CD8-positive, alpha-beta T cell (primary cell): ENCODE measurements at regions of chr10 and their contacts with region 1.

Region 1: GRCh38 chr10:62183442-62183841 is 85.2 kb downstream of the RTKN2 start:
- DNase-seq: peak in 7 of 9 experiments; percentile 20 to 89 (median 51)
- ATAC-seq: peak; percentile 87
- H3K4me3 ChIP-seq: no peak overlapping the region
- H3K4me3 Mint-ChIP-seq: peak overlapping the region; percentile 30
- H3K27ac ChIP-seq: peak overlapping the region; percentile 6 to 41
- H3K27ac Mint-ChIP-seq: peak overlapping the region; percentile 83
- H3K4me1 ChIP-seq: peaks cover 58% of the 10 kb centered on the region
- H3K4me1 Mint-ChIP-seq: peaks cover 75% of the 10 kb centered on the region
- H3K27me3 ChIP-seq: no peaks in the 10 kb centered on the region
- H3K27me3 Mint-ChIP-seq: no peaks in the 10 kb centered on the region
- CTCF ChIP-seq: no peak

Region 2: DNA sequence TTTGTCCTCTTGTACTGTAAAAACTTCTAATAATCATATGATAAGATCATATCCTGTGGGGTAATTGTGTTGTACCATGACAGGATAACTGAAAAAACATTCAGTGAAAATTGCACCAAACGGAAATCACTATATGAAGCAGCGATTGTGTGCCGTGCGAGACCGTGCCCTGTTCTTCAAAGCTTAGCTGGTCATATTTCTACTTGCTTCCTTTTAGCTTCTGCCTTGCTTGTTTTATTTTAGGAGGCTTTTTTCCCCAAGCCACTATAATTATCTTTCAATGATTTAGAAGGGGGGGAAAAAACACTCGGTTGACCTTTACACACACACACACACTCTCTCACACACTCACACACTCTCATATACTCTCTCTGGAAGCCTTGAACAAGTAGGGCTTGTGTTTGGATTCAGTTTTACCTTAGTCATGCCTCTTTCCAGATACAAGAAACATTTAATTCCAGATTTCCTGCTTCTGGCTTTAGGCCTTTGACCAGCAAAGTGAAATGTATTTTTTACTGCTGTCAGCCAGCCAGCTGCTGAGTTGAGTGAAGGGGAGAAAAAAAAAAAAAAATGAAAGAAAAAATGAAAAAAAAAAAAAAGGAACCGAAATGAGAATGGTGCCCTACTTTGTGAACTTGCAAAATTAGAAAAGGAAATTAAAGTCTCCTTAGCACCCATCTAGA is 100.6 kb before region 1 on chr10:
- CTCF ChIA-PET with region 1: interaction called, 4 read pairs
- POLR2A ChIA-PET with region 1: no interaction called
- intact Hi-C with region 1: loop called in 1 of 2 experiments (anchors 5 kb)
- DNase-seq: peak in 8 of 9 experiments; percentile 9 to 68 (median 36)
- ATAC-seq: peak; percentile 86
- H3K4me3 ChIP-seq: no peak overlapping the region
- H3K4me3 Mint-ChIP-seq: peak overlapping the region; percentile 46
- H3K27ac ChIP-seq: peak overlapping the region in 1 of 2 experiments; percentile 68
- H3K27ac Mint-ChIP-seq: peak overlapping the region; percentile 55
- H3K4me1 ChIP-seq: peaks cover 19% of the 10 kb centered on the region
- H3K4me1 Mint-ChIP-seq: peaks cover 43% of the 10 kb centered on the region
- H3K27me3 ChIP-seq: no peaks in the 10 kb centered on the region
- H3K27me3 Mint-ChIP-seq: no peaks in the 10 kb centered on the region
- CTCF ChIP-seq: no peak

Region 3: DNA sequence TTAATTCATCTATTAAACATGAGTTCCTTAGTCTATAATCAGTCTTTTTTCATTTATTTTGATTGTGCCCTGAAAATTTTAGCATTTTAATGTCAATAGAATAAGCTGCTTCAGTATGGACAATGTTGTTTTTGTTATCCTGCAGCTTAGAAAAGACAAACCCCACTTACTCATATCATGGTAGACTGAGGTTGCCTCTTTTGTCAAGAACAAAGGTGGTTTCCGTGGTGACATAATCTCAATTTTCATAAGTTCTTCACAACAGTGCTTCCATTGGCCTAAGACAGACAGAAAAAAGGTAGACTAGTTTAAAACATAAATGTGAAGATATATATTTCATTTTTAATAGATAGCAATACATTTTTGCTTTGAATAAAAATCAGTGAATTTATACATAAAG is 16.1 kb after region 1 on chr10:
- CTCF ChIA-PET with region 1: no interaction called
- POLR2A ChIA-PET with region 1: interaction called, 4 read pairs
- intact Hi-C with region 1: loop called in 1 of 2 experiments (anchors 2 kb)
- DNase-seq: peak in 2 of 9 experiments; percentile 34 to 65
- ATAC-seq: peak; percentile 82
- H3K4me3 ChIP-seq: no peak overlapping the region
- H3K4me3 Mint-ChIP-seq: no peak overlapping the region
- H3K27ac ChIP-seq: no peak overlapping the region
- H3K27ac Mint-ChIP-seq: peak overlapping the region; percentile 14
- H3K4me1 ChIP-seq: peaks cover 7% of the 10 kb centered on the region
- H3K4me1 Mint-ChIP-seq: peaks cover 10% of the 10 kb centered on the region
- H3K27me3 ChIP-seq: no peaks in the 10 kb centered on the region
- H3K27me3 Mint-ChIP-seq: no peaks in the 10 kb centered on the region
- CTCF ChIP-seq: no peak

Region 4: DNA sequence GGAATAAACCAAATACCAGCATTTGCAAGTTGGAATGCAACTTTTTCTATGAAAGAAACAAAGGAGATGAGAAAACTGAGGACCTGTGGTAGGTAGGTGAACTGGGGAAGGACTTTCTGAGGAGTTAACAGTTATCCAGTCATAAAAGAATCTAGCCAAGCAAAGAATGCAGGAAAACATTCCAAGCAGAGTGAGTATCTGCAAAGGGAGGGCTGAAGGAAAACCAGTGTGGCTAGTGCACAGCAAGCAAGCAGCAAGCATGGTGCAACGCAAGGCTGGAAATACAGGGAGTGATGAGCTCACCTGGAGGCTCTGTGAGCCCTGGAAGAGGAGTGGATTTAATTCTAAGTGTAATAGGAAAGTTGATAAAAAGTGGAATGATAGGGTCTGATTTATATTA is 41.2 kb after region 1 on chr10:
- CTCF ChIA-PET with region 1: no interaction called
- POLR2A ChIA-PET with region 1: no interaction called
- intact Hi-C with region 1: loop called in 1 of 2 experiments (anchors 5 kb)
- DNase-seq: no peak
- ATAC-seq: no peak
- H3K4me3 ChIP-seq: no peak overlapping the region
- H3K4me3 Mint-ChIP-seq: no peak overlapping the region
- H3K27ac ChIP-seq: no peak overlapping the region
- H3K27ac Mint-ChIP-seq: no peak overlapping the region
- H3K4me1 ChIP-seq: no peaks in the 10 kb centered on the region
- H3K4me1 Mint-ChIP-seq: no peaks in the 10 kb centered on the region
- H3K27me3 ChIP-seq: no peaks in the 10 kb centered on the region
- H3K27me3 Mint-ChIP-seq: no peaks in the 10 kb centered on the region
- CTCF ChIP-seq: no peak

Region 5: GRCh38 chr10:62231371-62231770 is 47.9 kb after region 1 on chr10:
- CTCF ChIA-PET with region 1: no interaction called
- POLR2A ChIA-PET with region 1: no interaction called
- intact Hi-C with region 1: loop called (anchors 5 kb)
- DNase-seq: no peak
- ATAC-seq: no peak
- H3K4me3 ChIP-seq: no peak overlapping the region
- H3K4me3 Mint-ChIP-seq: no peak overlapping the region
- H3K27ac ChIP-seq: no peak overlapping the region
- H3K27ac Mint-ChIP-seq: no peak overlapping the region
- H3K4me1 ChIP-seq: peaks cover 6% of the 10 kb centered on the region
- H3K4me1 Mint-ChIP-seq: peaks cover 14% of the 10 kb centered on the region
- H3K27me3 ChIP-seq: no peaks in the 10 kb centered on the region
- H3K27me3 Mint-ChIP-seq: no peaks in the 10 kb centered on the region
- CTCF ChIP-seq: no peak

Region 6: DNA sequence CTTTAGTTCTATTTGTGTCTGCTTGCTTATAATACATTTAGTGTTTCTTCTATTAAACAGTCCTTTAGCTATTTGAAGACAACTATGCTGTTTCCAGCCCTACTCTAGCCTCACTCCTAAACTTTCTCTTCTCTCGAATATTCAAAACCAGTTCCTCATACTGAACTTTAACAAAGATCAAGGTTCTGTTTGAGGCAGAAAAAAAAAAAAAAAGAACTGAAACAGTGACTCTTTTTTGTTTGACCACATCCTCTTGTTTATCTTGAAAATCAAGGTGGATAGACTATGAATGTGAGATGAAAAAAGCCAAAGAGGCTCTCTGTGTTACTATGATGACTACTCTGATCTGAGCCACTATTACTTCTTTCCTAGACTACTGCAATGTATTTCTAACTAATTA is 345.0 kb after region 1 on chr10:
- CTCF ChIA-PET with region 1: no interaction called
- POLR2A ChIA-PET with region 1: no interaction called
- intact Hi-C with region 1: loop called in 1 of 2 experiments (anchors 10 kb)
- DNase-seq: peak in 2 of 9 experiments; percentile 57 to 75
- ATAC-seq: peak; percentile 88
- H3K4me3 ChIP-seq: peak overlapping the region in 1 of 2 experiments; percentile 14
- H3K4me3 Mint-ChIP-seq: peak overlapping the region; percentile 40
- H3K27ac ChIP-seq: no peak overlapping the region
- H3K27ac Mint-ChIP-seq: peak overlapping the region; percentile 70
- H3K4me1 ChIP-seq: peaks cover 43% of the 10 kb centered on the region
- H3K4me1 Mint-ChIP-seq: peaks cover 44% of the 10 kb centered on the region
- H3K27me3 ChIP-seq: no peaks in the 10 kb centered on the region
- H3K27me3 Mint-ChIP-seq: no peaks in the 10 kb centered on the region
- CTCF ChIP-seq: no peak